Calu3 (cell line): ENCODE measurements at regions of chr5 and their contacts with region 1.

Region 1: DNA sequence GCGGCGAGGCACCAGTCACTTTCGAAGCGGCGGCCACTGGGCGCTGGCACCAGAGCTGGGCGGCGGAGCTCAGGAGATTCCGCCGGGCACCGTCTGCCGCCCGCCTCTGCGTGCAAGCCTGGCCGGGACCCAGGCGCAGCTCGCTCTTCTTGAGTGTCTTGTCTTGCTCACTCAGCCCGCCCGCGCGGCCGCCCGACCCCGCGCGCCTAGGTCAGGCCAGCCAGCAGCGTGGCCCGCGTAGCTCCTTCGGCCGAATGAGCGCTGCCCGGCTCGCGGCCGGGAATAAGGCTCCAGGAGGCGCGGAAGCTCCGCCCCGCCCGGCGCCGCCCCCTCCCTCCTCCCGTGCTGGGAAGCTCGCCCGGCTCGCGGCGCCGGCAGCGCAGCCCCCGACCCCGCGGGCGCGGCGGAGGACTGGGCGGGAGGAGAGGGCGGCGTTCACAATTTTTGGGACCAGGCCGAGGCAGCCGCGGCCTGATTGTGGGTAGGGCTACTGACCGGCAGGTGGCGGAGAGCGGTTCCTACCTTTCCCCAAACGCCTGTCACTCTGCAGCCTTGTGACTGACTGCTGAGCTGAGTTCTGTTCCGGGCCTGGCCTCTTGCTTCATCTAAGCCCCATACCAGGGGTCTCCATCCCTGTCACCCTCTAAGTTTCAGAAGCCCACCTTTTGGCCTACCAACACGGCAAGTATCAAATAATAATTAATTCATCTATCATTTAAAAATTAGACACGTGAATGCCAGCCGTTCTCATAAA is at the start of gene HBEGF:
- DNase-seq: peak; percentile 91
- H3K4me3 Mint-ChIP-seq: peak within 1 kb of the TSS; percentile 95
- H3K27ac Mint-ChIP-seq: peak within 1 kb of the TSS; percentile 63
- H3K4me1 Mint-ChIP-seq: peaks cover 53% of the 10 kb centered on the region
- H3K27me3 Mint-ChIP-seq: no peaks in the 10 kb centered on the region
- CTCF ChIP-seq: peak; percentile 49
- total RNA-seq, gene HBEGF: 6.4 and 7.2 TPM in 2 replicates

Region 2: GRCh38 chr5:140244525-140245025 is 102.0 kb before region 1 on chr5:
- CTCF ChIA-PET with region 1: interaction called, 169 read pairs
- intact Hi-C with region 1: loop called (anchors 1 kb)
- DNase-seq: peak; percentile 92
- H3K4me3 Mint-ChIP-seq: no peak overlapping the region
- H3K27ac Mint-ChIP-seq: peak overlapping the region; percentile 67
- H3K4me1 Mint-ChIP-seq: peaks cover 31% of the 10 kb centered on the region
- H3K27me3 Mint-ChIP-seq: no peaks in the 10 kb centered on the region
- CTCF ChIP-seq: peak; percentile 83

Region 3: GRCh38 chr5:140261403-140262171 is 84.9 kb before region 1 on chr5:
- CTCF ChIA-PET with region 1: interaction called, 72 read pairs
- intact Hi-C with region 1: no loop called
- DNase-seq: peak; percentile 88
- H3K4me3 Mint-ChIP-seq: peak overlapping the region; percentile 46
- H3K27ac Mint-ChIP-seq: peak overlapping the region; percentile 95
- H3K4me1 Mint-ChIP-seq: peaks cover 36% of the 10 kb centered on the region
- H3K27me3 Mint-ChIP-seq: no peaks in the 10 kb centered on the region
- CTCF ChIP-seq: no peak

Region 4: GRCh38 chr5:140302786-140303639 is 43.5 kb before region 1 on chr5 and contains the start of gene PFDN1:
- CTCF ChIA-PET with region 1: interaction called, 19 read pairs
- intact Hi-C with region 1: loop called (anchors 5 kb)
- DNase-seq: peak; percentile 94
- H3K4me3 Mint-ChIP-seq: peak within 1 kb of the TSS; percentile 90
- H3K27ac Mint-ChIP-seq: peak within 1 kb of the TSS; percentile 96
- H3K4me1 Mint-ChIP-seq: peaks cover 29% of the 10 kb centered on the region
- H3K27me3 Mint-ChIP-seq: no peaks in the 10 kb centered on the region
- CTCF ChIP-seq: no peak
- total RNA-seq, gene PFDN1: 67.5 and 71.9 TPM in 2 replicates

Region 5: GRCh38 chr5:140357726-140358093 is 11.2 kb after region 1 on chr5:
- CTCF ChIA-PET with region 1: interaction called, 27 read pairs
- intact Hi-C with region 1: no loop called
- DNase-seq: peak; percentile 90
- H3K4me3 Mint-ChIP-seq: peak overlapping the region; percentile 41
- H3K27ac Mint-ChIP-seq: peak overlapping the region; percentile 38
- H3K4me1 Mint-ChIP-seq: peaks cover 17% of the 10 kb centered on the region
- H3K27me3 Mint-ChIP-seq: no peaks in the 10 kb centered on the region
- CTCF ChIP-seq: peak; percentile 90